ENCODE measurements at regions of chr12 and their contacts with region 1.

Region 1: DNA sequence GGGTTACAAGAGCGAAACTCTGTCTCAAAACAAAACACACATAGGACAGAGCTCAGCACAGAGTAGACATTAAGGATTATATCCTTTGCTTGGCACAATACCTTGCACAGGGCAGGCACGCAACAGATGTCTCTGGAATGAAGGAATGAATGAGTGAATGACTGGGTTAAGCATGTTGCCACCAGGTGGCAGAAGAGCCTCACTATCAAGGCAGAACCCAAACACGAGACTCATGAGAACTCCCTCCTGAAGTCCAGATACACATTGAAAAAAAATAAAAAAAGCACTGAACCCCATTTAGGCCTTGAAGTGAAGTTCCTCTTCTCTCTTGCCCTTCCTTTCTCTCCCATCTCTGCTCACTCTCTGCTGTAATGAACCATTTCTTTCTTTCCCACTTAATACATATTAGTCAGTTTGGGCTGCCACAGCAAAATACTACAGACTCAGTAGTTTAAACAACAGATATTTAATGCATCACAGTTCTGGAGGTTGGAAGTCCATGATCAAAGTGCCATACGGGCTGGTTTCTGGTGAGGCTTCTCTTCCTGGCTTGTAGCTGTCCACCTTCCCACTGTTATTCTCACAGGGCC is 26.6 kb upstream of the LTA4H start:
- DNase-seq: peak; percentile 68 to 93 (median 79)
- H3K4me3 ChIP-seq: no peak overlapping the region
- H3K27ac ChIP-seq: no peak overlapping the region
- H3K4me1 ChIP-seq: no peaks in the 10 kb centered on the region
- H3K27me3 ChIP-seq: no peaks in the 10 kb centered on the region
- CTCF ChIP-seq: peak; percentile 64 to 97 (median 89)
- POLR2A ChIP-seq: no peak

Region 2: DNA sequence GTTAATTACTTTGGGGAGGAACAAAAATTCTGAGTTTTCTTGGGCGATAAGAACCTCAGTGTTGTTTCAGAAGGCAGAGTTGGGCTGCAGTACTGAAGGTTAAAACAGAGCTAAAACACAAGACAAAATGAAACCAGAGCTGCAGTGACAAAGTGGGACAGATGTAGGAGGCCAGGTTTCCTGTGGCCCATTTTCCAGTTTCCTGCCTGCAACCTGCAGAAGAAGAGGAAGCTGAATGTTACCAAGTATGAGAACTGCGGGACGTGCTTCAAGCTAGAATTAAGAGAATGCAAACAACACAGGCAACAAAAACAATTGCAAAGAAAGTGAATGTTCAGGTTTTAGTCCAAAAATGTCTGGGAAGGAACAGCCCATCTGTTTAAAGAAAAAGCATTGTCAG is 150.0 kb after region 1 on chr12:
- intact Hi-C with region 1: loop called (anchors 2 to 5 kb)
- DNase-seq: no peak
- H3K4me3 ChIP-seq: no peak overlapping the region
- H3K27ac ChIP-seq: peak overlapping the region in 4 of 5 donors; percentile 9 to 54 (median 20)
- H3K4me1 ChIP-seq: peaks cover 15 to 48% of the 10 kb centered on the region in 2 donors
- H3K27me3 ChIP-seq: no peaks in the 10 kb centered on the region
- CTCF ChIP-seq: no peak
- POLR2A ChIP-seq: no peak

Region 3: GRCh38 chr12:96399919-96400797 is 338.2 kb after region 1 on chr12 and contains the start of gene CDK17:
- intact Hi-C with region 1: loop called in 1 of 2 experiments (anchors 10 kb)
- DNase-seq: peak; percentile 78 to 91 (median 84)
- H3K4me3 ChIP-seq: peak within 1 kb of the TSS; percentile 66 to 96 (median 87)
- H3K27ac ChIP-seq: peak within 1 kb of the TSS; percentile 80 to 100 (median 98)
- H3K4me1 ChIP-seq: peaks cover 12 to 28% of the 10 kb centered on the region in 2 donors
- H3K27me3 ChIP-seq: no peaks in the 10 kb centered on the region
- CTCF ChIP-seq: peak in 4 of 6 experiments; percentile 12 to 53 (median 40)
- POLR2A ChIP-seq: peak; percentile 66 to 80
- total RNA-seq, gene CDK17: 10.3 to 52.6 (median 22.2) TPM

Region 4: GRCh38 chr12:96516472-96517430 is 454.8 kb after region 1 on chr12:
- intact Hi-C with region 1: loop called (anchors 5 kb)
- DNase-seq: peak; percentile 55 to 91 (median 77)
- H3K4me3 ChIP-seq: no peak overlapping the region
- H3K27ac ChIP-seq: no peak overlapping the region
- H3K4me1 ChIP-seq: no peaks in the 10 kb centered on the region
- H3K27me3 ChIP-seq: no peaks in the 10 kb centered on the region
- CTCF ChIP-seq: peak; percentile 52 to 84 (median 76)
- POLR2A ChIP-seq: no peak